HCT116 (cell line): ENCODE measurements at regions of chr11 and their contacts with region 1.

Region 1: DNA sequence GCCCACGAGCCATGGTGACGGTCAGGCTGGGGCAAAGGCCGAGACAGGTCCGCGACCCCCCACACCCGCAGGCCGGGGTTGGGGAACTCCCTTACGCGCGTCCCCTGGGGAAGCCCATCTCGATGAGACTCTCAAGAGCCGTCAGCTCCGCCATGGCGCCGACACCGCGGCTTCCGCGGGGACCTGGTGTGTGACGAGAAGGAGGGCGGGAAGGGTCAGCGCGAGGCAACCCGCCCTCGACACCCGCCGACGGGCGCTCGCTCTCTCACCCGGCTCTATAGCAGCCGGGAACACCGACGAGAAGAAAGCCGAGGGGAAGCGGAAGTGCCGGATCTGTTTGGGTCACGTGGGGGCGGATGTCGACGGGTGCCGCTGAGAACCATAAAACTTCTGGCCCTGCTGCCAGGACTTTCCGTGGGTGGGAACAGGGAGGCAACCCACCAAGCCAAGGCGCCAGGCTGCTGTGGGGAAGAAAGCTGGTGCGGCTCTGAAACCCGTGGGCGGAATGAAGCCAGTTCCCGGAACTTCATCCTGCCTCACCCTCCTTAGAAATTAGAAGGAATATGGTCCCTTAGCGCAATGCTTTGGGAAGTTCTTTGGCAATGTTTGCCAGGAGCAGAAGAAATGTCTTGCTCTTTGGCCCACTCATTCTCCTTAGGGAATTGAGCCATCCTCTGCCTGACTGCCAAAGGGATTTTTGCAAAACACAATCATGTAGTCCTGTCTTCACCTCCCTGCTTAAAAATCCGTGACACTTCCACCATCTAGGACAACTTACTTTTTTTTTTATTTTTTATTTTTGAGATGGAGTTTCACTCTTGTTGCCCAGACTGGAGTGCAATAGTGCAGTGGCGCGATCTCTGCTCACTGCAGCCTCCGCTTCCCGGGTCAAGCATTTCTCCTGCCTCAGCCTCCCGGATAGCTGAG is at the start of gene UBXN1:
- DNase-seq: peak; percentile 64
- ATAC-seq: peak; percentile 73
- H3K4me3 ChIP-seq: peak within 1 kb of the TSS; percentile 80 to 87
- H3K27ac ChIP-seq: peak within 1 kb of the TSS; percentile 82
- H3K4me1 ChIP-seq: peaks cover 23 to 44% of the 10 kb centered on the region in 2 experiments
- H3K27me3 ChIP-seq: no peaks in the 10 kb centered on the region
- CTCF ChIP-seq: no peak
- POLR2A ChIP-seq: no peak
- RAD21 ChIP-seq: no peak
- total RNA-seq, gene UBXN1: 94.2 TPM

Region 2: DNA sequence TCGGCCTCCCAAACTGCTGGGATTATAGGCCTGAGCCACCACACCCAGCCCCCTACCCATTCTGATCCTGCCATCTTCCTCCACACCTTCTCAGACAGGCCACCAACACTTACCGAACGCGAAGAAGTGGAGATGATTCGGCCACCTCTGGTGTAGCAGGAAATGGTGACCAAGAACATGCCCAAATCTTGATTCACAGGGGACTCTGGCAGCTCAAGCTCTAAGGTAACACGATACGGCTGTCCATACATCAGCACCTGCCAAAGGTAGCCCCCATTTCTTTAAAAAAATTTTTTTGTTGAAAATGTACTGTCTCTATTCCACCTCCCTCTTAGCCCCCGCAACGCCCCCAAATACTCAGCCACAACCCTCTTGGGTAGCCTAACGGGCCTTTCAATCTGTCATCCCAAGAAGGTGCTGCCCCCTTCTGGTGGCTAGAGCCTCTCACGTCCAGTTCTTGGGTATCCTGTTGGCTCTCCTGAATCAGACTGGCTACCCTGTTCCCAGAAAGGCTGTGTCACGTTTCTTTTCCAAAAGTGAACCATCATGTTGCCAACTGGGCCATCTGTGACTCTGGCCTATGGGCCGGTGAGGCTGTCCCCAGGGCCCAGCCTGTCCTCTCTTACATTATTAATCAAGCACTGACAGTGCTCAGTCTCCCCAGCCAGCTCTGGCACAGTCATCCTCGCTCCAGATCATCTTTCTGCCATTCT is 15.6 kb after region 1 on chr11:
- CTCF ChIA-PET with region 1: interaction called, 10 read pairs
- POLR2A ChIA-PET with region 1: no interaction called
- RAD21 ChIA-PET with region 1: no interaction called
- intact Hi-C with region 1: loop called (anchors 2 kb)
- DNase-seq: peak; percentile 72
- ATAC-seq: peak; percentile 90
- H3K4me3 ChIP-seq: no peak overlapping the region
- H3K27ac ChIP-seq: peak overlapping the region; percentile 56
- H3K4me1 ChIP-seq: no peaks in the 10 kb centered on the region
- H3K27me3 ChIP-seq: no peaks in the 10 kb centered on the region
- CTCF ChIP-seq: peak; percentile 86 to 88 (median 87); a peak in 5 of 6 replicates
- POLR2A ChIP-seq: no peak
- RAD21 ChIP-seq: peak; percentile 80

Region 3: DNA sequence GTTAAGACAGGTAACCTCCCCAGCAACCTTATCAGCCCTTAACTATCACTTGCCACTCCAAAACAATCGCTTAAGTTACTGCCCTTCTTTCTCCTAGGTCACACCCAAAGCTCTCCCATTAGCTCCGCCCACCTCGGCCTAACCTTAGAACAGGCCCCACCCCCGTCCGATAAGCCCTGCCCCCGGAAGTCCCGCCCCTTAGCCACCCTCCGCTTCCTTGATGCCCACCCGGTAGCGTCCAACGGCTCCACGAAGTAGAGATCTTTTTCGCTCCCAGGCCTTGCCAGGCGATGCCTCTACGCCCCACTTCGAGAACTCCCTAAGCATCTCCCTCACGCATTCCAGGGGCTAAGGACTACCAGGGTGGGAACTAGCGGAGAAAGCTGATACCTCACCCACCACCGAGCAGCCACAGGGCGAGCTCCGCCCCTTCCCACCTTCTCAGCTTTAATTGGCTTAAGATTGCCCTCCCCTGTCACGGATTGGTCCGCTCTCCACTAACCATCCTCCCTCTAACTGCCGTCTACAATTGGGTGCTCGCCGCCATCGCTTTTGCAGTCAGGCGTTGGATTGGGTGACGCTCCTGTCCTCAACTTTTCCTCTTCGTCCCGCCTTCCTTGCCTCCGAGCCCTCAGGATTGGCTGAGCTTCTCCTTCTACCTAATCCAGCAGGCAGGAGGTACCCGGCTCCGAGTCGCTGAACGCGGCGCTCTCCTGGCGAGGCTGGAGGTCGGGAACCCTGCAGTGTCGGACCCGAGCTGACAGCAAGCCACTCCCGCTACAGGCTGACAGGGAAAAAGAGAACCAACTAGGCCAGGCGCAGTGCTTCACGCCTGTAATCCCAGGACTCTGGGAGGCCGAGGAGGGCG is 74.9 kb after region 1 on chr11 and contains the start of gene ZBTB3:
- CTCF ChIA-PET with region 1: interaction called, 6 read pairs
- POLR2A ChIA-PET with region 1: interaction called, 10 read pairs
- RAD21 ChIA-PET with region 1: no interaction called
- intact Hi-C with region 1: no loop called
- DNase-seq: peak; percentile 99
- ATAC-seq: peak; percentile 96
- H3K4me3 ChIP-seq: peak within 1 kb of the TSS; percentile 70 to 84
- H3K27ac ChIP-seq: peak within 1 kb of the TSS; percentile 76
- H3K4me1 ChIP-seq: peaks cover 4 to 18% of the 10 kb centered on the region in 2 experiments; a peak in 3 of 4 replicates
- H3K27me3 ChIP-seq: no peaks in the 10 kb centered on the region
- CTCF ChIP-seq: no peak
- POLR2A ChIP-seq: peak; percentile 86
- RAD21 ChIP-seq: no peak
- total RNA-seq, gene ZBTB3: 11.3 TPM